Activated CD4-positive, alpha-beta T cell treated with anti-CD3 and anti-CD28 coated beads for 36 hours (primary cell): ENCODE measurements at regions of chr21 and their contacts with region 1.

Region 1: DNA sequence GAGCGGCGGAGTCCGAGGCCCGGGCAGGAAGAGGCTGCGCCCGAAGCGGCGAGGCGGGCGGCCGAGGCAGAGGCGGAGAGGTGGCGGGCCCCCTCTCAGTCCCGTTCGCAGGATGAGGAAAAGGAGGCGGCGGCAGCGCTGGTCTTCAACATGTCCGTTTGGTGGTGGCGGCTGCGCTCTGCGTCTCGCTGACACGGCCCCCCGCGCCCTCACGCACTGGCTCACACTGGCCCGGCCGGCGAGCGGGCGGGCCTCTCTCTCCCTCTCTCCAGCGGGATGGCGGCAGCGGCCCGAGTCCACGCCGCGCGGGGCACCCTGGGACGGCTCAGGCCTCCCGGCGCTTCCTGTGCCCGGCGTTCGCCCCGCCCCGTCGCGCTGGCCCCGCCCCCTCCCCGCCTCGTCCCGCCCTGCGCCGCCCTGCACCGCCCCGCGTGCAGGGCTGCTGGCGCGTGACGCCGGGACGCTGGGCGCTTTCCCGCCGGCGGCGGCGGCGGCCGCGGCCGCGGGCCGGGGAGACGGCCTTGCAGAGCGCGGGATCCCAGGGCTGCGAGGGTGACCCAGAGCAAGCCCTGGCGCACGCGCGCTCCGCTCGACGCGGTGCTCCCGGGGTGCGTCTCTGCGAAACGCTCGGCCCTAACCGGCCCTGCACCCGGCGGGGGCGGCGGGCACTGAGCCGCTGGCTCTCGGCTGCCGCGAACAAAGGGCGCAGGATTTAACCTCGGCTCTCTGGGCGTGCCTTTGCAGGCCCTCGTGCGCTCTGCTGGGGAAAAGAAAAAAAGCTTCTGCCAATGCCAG is at the start of gene SCAF4:
- DNase-seq: peak; percentile 90
- ATAC-seq: peak; percentile 88
- H3K4me3 Mint-ChIP-seq: no peak within 1 kb of the TSS
- H3K27ac Mint-ChIP-seq: peak within 1 kb of the TSS; percentile 78
- H3K4me1 Mint-ChIP-seq: peaks cover 11% of the 10 kb centered on the region
- H3K27me3 Mint-ChIP-seq: no peaks in the 10 kb centered on the region
- total RNA-seq, gene SCAF4: 47.1 to 62.8 TPM

Region 2: DNA sequence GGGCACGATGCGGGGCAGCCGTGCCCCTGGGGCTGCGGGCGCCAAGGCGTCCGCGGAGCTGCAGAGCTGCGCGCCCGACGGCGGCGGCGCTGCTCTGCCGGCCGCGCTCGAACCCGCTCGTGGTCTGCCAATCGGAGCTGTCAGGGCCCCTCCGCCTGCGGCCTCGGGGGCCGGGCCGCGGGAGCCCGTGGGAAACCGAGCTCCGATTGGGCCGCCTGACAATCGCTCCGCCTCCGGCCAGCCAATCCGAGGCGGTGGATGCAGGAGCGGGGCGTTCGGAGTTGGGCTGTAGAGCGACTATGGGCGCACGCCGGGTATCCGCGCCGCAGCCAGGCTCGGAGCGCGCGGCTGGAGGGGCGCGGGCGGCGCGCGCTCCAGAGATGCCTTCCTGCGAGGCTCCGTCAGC is 173.0 kb before region 1 on chr21:
- CTCF ChIA-PET with region 1: no interaction called
- POLR2A ChIA-PET with region 1: no interaction called
- intact Hi-C with region 1: loop called in 1 of 2 experiments (anchors 1 kb)
- DNase-seq: peak; percentile 97
- ATAC-seq: peak; percentile 88
- H3K4me3 Mint-ChIP-seq: peak overlapping the region; percentile 80
- H3K27ac Mint-ChIP-seq: no peak overlapping the region
- H3K4me1 Mint-ChIP-seq: peaks cover 34% of the 10 kb centered on the region
- H3K27me3 Mint-ChIP-seq: peaks cover 24% of the 10 kb centered on the region

Region 3: DNA sequence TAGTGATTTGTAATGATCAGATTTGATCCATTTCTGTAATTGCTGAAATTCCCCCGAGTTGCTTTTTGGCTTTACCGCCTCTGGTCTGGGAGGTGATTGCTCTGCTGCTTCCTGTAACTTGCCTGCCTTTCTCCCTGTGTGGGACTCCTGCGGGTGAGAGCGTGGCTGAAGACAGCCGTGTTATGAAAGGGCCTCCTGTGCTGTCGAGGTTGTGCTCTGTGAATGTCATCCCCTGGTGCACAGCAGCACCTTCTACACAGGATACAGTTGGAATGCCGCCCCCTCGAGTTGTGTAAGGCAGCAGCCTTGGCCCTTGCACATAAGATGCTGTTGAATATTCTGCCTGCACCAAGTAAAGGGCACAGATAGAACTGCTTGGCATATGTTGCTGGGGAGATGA is 66.6 kb before region 1 on chr21:
- CTCF ChIA-PET with region 1: interaction called, 3 read pairs
- POLR2A ChIA-PET with region 1: no interaction called
- intact Hi-C with region 1: loop called in 1 of 2 experiments (anchors 1 kb)
- DNase-seq: peak; percentile 71
- ATAC-seq: peak; percentile 71
- H3K4me3 Mint-ChIP-seq: peak overlapping the region; percentile 30
- H3K27ac Mint-ChIP-seq: peak overlapping the region; percentile 78
- H3K4me1 Mint-ChIP-seq: peaks cover 95% of the 10 kb centered on the region
- H3K27me3 Mint-ChIP-seq: no peaks in the 10 kb centered on the region

Region 4: DNA sequence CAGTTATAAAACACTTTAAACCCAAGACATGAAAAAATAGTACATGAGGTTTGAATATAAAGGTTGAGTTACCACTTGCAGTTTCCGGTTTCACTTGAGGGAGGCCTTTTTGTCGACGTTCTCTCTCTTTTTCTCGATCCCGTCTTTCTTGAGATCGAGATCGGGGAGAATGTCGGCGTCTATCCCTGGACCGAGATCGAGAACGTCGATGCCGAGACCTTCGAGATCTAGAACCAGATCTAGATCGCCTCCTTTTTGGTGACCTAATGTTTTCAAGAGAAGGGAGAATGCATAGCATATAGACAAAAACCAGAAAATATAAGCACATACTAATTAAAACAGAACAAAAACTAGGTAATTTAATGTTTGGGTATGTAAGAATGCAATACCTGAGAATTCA is 38.8 kb before region 1 on chr21:
- CTCF ChIA-PET with region 1: no interaction called
- POLR2A ChIA-PET with region 1: no interaction called
- intact Hi-C with region 1: no loop called
- DNase-seq: no peak
- ATAC-seq: no peak
- H3K4me3 Mint-ChIP-seq: no peak overlapping the region
- H3K27ac Mint-ChIP-seq: no peak overlapping the region
- H3K4me1 Mint-ChIP-seq: peaks cover 3% of the 10 kb centered on the region
- H3K27me3 Mint-ChIP-seq: no peaks in the 10 kb centered on the region

Region 5: GRCh38 chr21:32278518-32279376 is 546.7 kb after region 1 on chr21 and contains the start of gene MIS18A:
- CTCF ChIA-PET with region 1: no interaction called
- POLR2A ChIA-PET with region 1: no interaction called
- intact Hi-C with region 1: loop called in 1 of 2 experiments (anchors 1 kb)
- DNase-seq: peak; percentile 98
- ATAC-seq: peak; percentile 90
- H3K4me3 Mint-ChIP-seq: peak within 1 kb of the TSS; percentile 86
- H3K27ac Mint-ChIP-seq: peak within 1 kb of the TSS; percentile 84
- H3K4me1 Mint-ChIP-seq: peaks cover 17% of the 10 kb centered on the region
- H3K27me3 Mint-ChIP-seq: no peaks in the 10 kb centered on the region
- total RNA-seq, gene MIS18A: 21.5 to 35.3 TPM

Region 6: GRCh38 chr21:32727687-32728455 is 995.9 kb after region 1 on chr21 and contains the start of gene SYNJ1:
- CTCF ChIA-PET with region 1: no interaction called
- POLR2A ChIA-PET with region 1: no interaction called
- intact Hi-C with region 1: loop called in 1 of 2 experiments (anchors 5 kb)
- DNase-seq: peak; percentile 97
- ATAC-seq: peak; percentile 91
- H3K4me3 Mint-ChIP-seq: peak within 1 kb of the TSS; percentile 93
- H3K27ac Mint-ChIP-seq: peak within 1 kb of the TSS; percentile 91
- H3K4me1 Mint-ChIP-seq: peaks cover 54% of the 10 kb centered on the region
- H3K27me3 Mint-ChIP-seq: no peaks in the 10 kb centered on the region
- total RNA-seq, gene SYNJ1: 6.3 to 10.5 TPM